MCF 10A (cell line): ENCODE measurements at regions of chr2 and their contacts with region 1.

Region 1: GRCh38 chr2:60581433-60582282 is 28.2 kb upstream of the BCL11A start:
- DNase-seq: peak; percentile 56
- H3K4me3 Mint-ChIP-seq: peak overlapping the region; percentile 61
- H3K27ac Mint-ChIP-seq: no peak overlapping the region
- H3K4me1 Mint-ChIP-seq: peaks cover 9% of the 10 kb centered on the region
- H3K27me3 Mint-ChIP-seq: no peaks in the 10 kb centered on the region
- CTCF ChIP-seq: peak; percentile 94

Region 2: DNA sequence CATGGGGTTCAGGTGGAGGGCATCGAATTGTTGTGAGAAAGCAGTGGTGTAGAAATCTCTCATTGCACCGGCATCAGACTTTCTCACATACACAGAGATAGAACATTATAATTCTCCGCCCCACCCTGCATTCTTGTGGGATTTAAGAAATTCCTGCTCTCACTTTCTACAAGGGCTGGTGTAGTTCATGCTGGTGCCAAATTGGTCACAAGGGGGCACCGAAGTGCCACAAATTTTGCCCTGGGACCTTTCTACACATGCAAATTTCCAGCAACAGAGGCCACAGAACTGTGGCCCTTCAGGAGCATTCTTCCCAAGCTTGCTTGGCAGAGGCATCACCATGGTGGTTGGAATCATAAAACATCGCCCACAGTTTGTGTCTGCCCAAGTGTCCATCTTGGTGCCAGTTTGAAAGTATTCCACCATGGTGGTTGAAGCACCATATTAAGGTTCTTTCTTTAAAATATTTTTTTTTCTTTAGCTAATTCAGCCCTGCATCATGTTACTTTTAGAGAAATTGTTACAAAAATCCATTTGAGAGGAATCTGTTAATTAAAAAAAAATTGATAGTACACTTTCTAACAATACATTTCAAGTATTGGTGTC is 1819.4 kb before region 1 on chr2:
- CTCF ChIA-PET with region 1: interaction called, 15 read pairs
- POLR2A ChIA-PET with region 1: no interaction called
- intact Hi-C with region 1: no loop called
- DNase-seq: peak; percentile 81
- H3K4me3 Mint-ChIP-seq: no peak overlapping the region
- H3K27ac Mint-ChIP-seq: no peak overlapping the region
- H3K4me1 Mint-ChIP-seq: peaks cover 6% of the 10 kb centered on the region
- H3K27me3 Mint-ChIP-seq: no peaks in the 10 kb centered on the region
- CTCF ChIP-seq: peak; percentile 69

Region 3: DNA sequence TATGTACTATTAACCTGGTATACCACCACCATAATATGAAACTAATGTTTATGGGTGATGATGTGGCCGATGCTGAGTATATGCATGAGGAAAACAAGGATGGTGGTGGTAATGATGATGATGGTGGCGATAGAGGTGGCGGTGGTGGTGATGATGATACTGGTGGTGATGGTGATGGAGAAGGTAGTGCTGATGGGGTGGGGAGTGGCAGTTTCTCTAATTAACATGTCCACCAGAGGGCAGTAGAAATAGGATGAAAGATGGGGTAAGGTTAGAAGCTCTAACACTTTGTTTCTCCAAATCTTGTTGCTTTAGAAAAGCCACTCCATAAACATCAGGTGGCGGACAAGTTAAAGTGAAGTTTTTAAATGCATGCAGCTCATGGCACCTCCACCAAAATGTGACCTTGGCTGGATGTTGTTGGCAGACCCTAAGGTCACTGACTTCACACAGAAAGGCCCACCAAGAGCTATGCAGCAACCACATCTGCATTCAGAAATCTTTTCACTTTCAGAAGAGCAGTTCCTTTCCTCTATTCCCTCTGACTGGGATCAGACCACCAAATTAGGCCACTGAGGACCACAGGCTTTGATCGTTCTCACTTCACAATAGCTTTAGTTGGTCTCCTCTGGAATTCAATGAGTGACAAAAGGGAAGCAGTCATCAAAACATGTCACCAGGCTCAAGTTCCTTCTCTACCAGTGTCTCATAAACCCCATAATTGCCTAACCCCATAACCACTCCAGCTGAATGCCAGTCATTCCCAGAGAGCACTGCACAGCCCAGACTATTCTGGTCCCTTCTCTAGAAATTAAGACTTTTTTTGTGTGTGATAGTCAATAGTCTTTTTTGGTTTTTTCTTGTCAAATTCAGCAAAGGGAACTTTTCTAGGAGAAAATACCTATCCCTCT is 20.7 kb before region 1 on chr2:
- CTCF ChIA-PET with region 1: interaction called, 62 read pairs
- POLR2A ChIA-PET with region 1: interaction called, 4 read pairs
- intact Hi-C with region 1: loop called (anchors 1 kb)
- DNase-seq: peak; percentile 58
- H3K4me3 Mint-ChIP-seq: no peak overlapping the region
- H3K27ac Mint-ChIP-seq: no peak overlapping the region
- H3K4me1 Mint-ChIP-seq: no peaks in the 10 kb centered on the region
- H3K27me3 Mint-ChIP-seq: peaks cover 37% of the 10 kb centered on the region
- CTCF ChIP-seq: peak; percentile 41

Region 4: GRCh38 chr2:60596411-60596810 is 14.8 kb after region 1 on chr2:
- CTCF ChIA-PET with region 1: interaction called, 14 read pairs
- POLR2A ChIA-PET with region 1: interaction called, 5 read pairs
- intact Hi-C with region 1: no loop called
- DNase-seq: no peak
- H3K4me3 Mint-ChIP-seq: no peak overlapping the region
- H3K27ac Mint-ChIP-seq: no peak overlapping the region
- H3K4me1 Mint-ChIP-seq: peaks cover 8% of the 10 kb centered on the region
- H3K27me3 Mint-ChIP-seq: no peaks in the 10 kb centered on the region
- CTCF ChIP-seq: no peak

Region 5: GRCh38 chr2:60602828-60603532 is 21.3 kb after region 1 on chr2:
- CTCF ChIA-PET with region 1: interaction called, 11 read pairs
- POLR2A ChIA-PET with region 1: interaction called, 3 read pairs
- intact Hi-C with region 1: no loop called
- DNase-seq: no peak
- H3K4me3 Mint-ChIP-seq: no peak overlapping the region
- H3K27ac Mint-ChIP-seq: no peak overlapping the region
- H3K4me1 Mint-ChIP-seq: peaks cover under 1% of the 10 kb centered on the region
- H3K27me3 Mint-ChIP-seq: no peaks in the 10 kb centered on the region
- CTCF ChIP-seq: no peak

Region 6: DNA sequence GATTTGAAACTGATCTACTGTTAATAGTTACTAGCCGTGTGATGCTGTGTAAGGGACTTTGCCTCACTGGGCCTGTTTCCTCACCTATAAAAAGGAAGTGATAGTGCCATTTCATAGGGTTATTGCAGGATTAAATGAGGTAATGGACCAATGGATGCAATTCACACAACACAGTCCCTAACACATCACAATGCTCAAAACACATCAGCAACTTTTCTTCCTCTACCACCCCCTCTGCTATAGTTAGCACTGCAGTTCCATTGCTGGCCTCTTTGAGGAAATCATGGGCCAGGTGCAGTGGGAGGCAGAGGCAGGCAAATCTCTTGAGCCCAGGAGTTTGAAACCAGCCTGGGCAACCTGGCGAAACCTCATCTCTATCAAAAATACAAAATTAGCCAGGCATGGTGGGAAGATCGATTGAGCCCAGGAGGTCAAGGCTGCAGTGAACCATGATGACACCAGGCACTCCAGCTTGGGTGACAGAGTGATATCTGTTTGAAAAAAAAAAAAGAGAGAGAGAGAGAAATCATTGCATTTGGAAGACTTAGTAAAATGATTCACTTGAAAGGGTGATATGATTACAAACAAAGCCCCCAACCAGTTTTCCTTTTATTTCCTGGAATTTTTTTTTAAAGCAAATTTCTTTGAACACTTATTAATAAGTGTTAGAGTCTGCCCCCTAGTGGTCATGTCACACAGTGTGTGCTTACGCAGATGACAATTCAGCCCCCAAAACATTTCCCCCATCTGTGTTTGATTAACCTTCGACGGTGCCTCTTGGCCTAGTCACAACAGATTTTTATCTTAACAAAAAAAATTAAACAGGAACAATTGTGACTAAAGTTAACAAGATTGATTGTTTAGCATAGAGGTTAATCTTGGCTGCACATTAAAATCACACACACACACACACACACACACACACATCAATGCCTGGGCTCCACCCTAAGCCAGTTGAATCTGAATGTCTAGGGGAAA is 60.4 kb after region 1 on chr2:
- CTCF ChIA-PET with region 1: interaction called, 25 read pairs
- POLR2A ChIA-PET with region 1: no interaction called
- intact Hi-C with region 1: no loop called
- DNase-seq: peak; percentile 60
- H3K4me3 Mint-ChIP-seq: no peak overlapping the region
- H3K27ac Mint-ChIP-seq: no peak overlapping the region
- H3K4me1 Mint-ChIP-seq: no peaks in the 10 kb centered on the region
- H3K27me3 Mint-ChIP-seq: peaks cover 22% of the 10 kb centered on the region
- CTCF ChIP-seq: peak; percentile 64

Region 7: DNA sequence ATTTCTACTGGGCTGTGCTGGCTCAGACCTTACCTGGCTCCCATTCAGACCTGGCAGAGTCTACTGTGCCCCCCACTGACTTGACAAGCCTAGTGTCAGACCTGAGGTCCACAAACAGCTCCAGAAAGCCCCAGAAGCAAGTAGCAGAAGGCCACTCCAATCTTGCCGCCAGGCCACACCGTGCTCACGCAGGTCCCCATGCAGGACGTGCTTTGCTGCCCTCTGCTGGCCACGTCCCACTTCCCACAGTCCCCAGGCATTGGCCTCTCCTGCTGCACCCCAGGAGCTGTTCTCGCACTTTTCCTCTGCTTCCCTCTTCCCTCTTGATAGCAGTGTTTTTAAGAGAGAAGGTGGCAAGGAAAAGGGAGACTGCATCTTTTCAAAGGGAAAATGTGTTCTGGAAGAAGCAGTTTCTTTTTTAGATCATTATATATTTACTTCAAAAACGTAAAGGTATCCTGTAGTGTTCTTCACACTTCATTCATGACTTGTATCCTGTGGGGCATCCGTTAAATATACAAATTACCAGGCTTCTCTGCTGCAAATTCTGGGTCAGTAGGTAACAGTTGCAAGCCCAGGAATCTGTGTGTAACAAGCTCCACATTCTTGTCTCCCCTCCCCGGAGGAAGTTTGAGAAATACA is 93.0 kb after region 1 on chr2:
- CTCF ChIA-PET with region 1: interaction called, 30 read pairs
- POLR2A ChIA-PET with region 1: no interaction called
- intact Hi-C with region 1: no loop called
- DNase-seq: peak; percentile 77
- H3K4me3 Mint-ChIP-seq: no peak overlapping the region
- H3K27ac Mint-ChIP-seq: no peak overlapping the region
- H3K4me1 Mint-ChIP-seq: peaks cover 11% of the 10 kb centered on the region
- H3K27me3 Mint-ChIP-seq: peaks cover 21% of the 10 kb centered on the region
- CTCF ChIP-seq: peak; percentile 83